Activated CD4-positive, alpha-beta memory T cell treated with anti-CD3 and anti-CD28 coated beads, Interleukin-2, amount 10 ng/mL, durations not matched to agents 7 days and 5 days (primary cell): ENCODE measurements at regions of chr14 and their contacts with region 1.

Region 1: GRCh38 chr14:32102152-32102787 is 25.2 kb downstream of the ARHGAP5 start:
- DNase-seq: peak; percentile 21
- H3K4me3 Mint-ChIP-seq: no peak overlapping the region
- H3K27ac Mint-ChIP-seq: peak overlapping the region; percentile 65
- H3K4me1 Mint-ChIP-seq: peaks cover 26% of the 10 kb centered on the region
- H3K27me3 Mint-ChIP-seq: no peaks in the 10 kb centered on the region

Region 2: GRCh38 chr14:32076278-32077080 is 25.8 kb before region 1 on chr14:
- CTCF ChIA-PET with region 1: no interaction called
- POLR2A ChIA-PET with region 1: interaction called, 13 read pairs
- DNase-seq: peak; percentile 84
- H3K4me3 Mint-ChIP-seq: peak overlapping the region; percentile 95
- H3K27ac Mint-ChIP-seq: peak overlapping the region; percentile 72
- H3K4me1 Mint-ChIP-seq: peaks cover 35% of the 10 kb centered on the region
- H3K27me3 Mint-ChIP-seq: peaks cover 18% of the 10 kb centered on the region